Activated CD4-positive, alpha-beta memory T cell treated with anti-CD3 and anti-CD28 coated beads, Interleukin-2, amount 10 ng/mL, durations not matched to agents 7 days and 5 days (primary cell): ENCODE measurements at regions of chr1 and their contacts with region 1.

Region 1: DNA sequence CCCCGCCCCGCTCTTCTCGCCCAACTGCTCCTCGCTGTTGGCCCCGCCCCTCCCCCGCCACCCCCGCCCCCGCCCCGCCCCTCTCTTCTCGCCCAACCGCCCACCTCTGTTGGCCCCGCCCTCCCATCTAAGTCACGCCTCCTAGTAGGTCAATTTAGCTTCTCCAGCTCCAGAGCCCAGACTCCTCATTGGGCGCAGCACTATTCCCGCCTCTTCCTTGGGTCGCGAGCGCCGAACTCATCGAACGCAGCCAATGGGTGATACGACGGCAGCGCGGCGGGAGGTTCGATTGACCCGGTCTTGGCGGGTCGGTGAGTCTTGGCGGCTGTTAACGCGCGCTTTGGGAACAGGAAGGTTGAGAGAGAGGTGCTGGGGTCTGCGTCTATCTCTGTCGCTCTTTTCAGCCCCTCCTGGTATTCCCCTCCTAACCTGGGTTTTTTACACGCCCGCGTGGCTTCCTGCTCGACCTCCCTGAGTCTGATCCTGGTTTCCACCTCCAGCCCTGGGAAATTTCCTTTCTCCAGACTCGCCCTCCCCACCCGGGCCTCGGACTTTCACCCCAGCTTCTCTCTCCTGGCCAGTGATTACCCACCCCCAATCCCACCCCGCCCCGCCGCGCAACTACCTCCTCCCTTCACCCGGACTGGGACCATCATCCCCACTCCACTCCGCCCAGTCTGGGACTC is at the start of gene RAD54L:
- DNase-seq: peak; percentile 98
- H3K4me3 Mint-ChIP-seq: peak within 1 kb of the TSS; percentile 87
- H3K27ac Mint-ChIP-seq: peak within 1 kb of the TSS; percentile 83
- H3K4me1 Mint-ChIP-seq: peaks cover 47% of the 10 kb centered on the region
- H3K27me3 Mint-ChIP-seq: no peaks in the 10 kb centered on the region
- total RNA-seq, gene RAD54L: 43.9 to 44.0 TPM

Region 2: GRCh38 chr1:46215504-46215903 is 32.1 kb before region 1 on chr1:
- CTCF ChIA-PET with region 1: no interaction called
- POLR2A ChIA-PET with region 1: no interaction called
- DNase-seq: no peak
- H3K4me3 Mint-ChIP-seq: no peak overlapping the region
- H3K27ac Mint-ChIP-seq: no peak overlapping the region
- H3K4me1 Mint-ChIP-seq: no peaks in the 10 kb centered on the region
- H3K27me3 Mint-ChIP-seq: peaks cover 11% of the 10 kb centered on the region

Region 3: GRCh38 chr1:46236882-46237281 is 10.7 kb before region 1 on chr1:
- CTCF ChIA-PET with region 1: interaction called, 10 read pairs
- POLR2A ChIA-PET with region 1: interaction called, 5 read pairs
- DNase-seq: no peak
- H3K4me3 Mint-ChIP-seq: no peak overlapping the region
- H3K27ac Mint-ChIP-seq: no peak overlapping the region
- H3K4me1 Mint-ChIP-seq: no peaks in the 10 kb centered on the region
- H3K27me3 Mint-ChIP-seq: peaks cover 1% of the 10 kb centered on the region

Region 4: GRCh38 chr1:46303038-46303871 is 55.7 kb after region 1 on chr1 and contains the starts of genes LRRC41 and UQCRH:
- CTCF ChIA-PET with region 1: interaction called, 7 read pairs
- POLR2A ChIA-PET with region 1: interaction called, 26 read pairs
- DNase-seq: peak; percentile 94
- H3K4me3 Mint-ChIP-seq: peak within 1 kb of the TSS; percentile 95
- H3K27ac Mint-ChIP-seq: peak within 1 kb of the TSS; percentile 95
- H3K4me1 Mint-ChIP-seq: peaks cover 48% of the 10 kb centered on the region
- H3K27me3 Mint-ChIP-seq: no peaks in the 10 kb centered on the region
- total RNA-seq, gene LRRC41: 40.3 to 41.7 TPM
- total RNA-seq, gene UQCRH: 266 to 274 TPM

Region 5: GRCh38 chr1:46340404-46341221 is 93.0 kb after region 1 on chr1 and contains the start of gene NSUN4:
- CTCF ChIA-PET with region 1: interaction called, 46 read pairs
- POLR2A ChIA-PET with region 1: interaction called, 13 read pairs
- DNase-seq: peak; percentile 88
- H3K4me3 Mint-ChIP-seq: peak within 1 kb of the TSS; percentile 98
- H3K27ac Mint-ChIP-seq: peak within 1 kb of the TSS; percentile 95
- H3K4me1 Mint-ChIP-seq: peaks cover 40% of the 10 kb centered on the region
- H3K27me3 Mint-ChIP-seq: no peaks in the 10 kb centered on the region
- total RNA-seq, gene NSUN4: 21.0 to 21.4 TPM